PC-3 (cell line): ENCODE measurements at regions of chr6 and their contacts with region 1.

Region 1: GRCh38 chr6:114304304-114304887 is 38.4 kb downstream of the HS3ST5 start:
- DNase-seq: peak; percentile 64
- ATAC-seq: peak; percentile 59
- H3K4me3 ChIP-seq: no peak overlapping the region
- H3K27ac ChIP-seq: no peak overlapping the region
- H3K4me1 ChIP-seq: no peaks in the 10 kb centered on the region; the same call in 1 of the 2 replicates
- H3K27me3 ChIP-seq: no peaks in the 10 kb centered on the region
- CTCF ChIP-seq: peak; percentile 65

Region 2: DNA sequence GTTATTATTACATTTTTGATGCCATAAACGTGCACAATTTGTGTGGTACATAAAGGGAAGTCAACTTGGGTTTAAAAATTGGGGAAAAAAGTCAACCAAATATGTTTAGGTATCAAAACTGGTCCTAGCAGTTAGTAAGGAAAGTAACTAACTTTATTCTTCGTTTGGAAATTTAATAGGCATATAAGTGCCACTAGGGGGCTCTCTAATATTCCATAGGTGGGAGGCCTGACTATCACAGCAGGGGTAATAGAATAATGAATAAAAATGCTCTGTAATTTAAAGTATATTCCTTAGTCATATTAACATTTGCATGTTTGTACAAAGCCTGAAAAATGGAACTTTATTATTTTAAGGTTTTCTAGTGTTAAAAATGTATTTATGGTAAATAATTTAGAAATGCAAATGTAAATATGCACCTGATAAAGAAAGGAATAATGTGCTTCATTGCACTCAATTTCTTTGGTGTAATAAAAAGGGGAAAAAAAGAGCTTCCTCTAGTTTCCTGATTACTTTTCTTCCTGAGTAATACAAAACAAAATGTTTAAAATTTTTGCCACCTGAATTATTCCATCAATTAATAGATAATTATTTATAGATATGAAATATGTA is 207.7 kb before region 1 on chr6:
- CTCF ChIA-PET with region 1: no interaction called
- POLR2A ChIA-PET with region 1: no interaction called
- intact Hi-C with region 1: loop called (anchors 2 kb)
- DNase-seq: peak; percentile 52
- ATAC-seq: no peak
- H3K4me3 ChIP-seq: no peak overlapping the region
- H3K27ac ChIP-seq: no peak overlapping the region
- H3K4me1 ChIP-seq: no peaks in the 10 kb centered on the region; the same call in 1 of the 2 replicates
- H3K27me3 ChIP-seq: no peaks in the 10 kb centered on the region
- CTCF ChIP-seq: peak; percentile 81

Region 3: GRCh38 chr6:114169763-114170162 is 134.6 kb before region 1 on chr6:
- CTCF ChIA-PET with region 1: no interaction called
- POLR2A ChIA-PET with region 1: no interaction called
- intact Hi-C with region 1: loop called (anchors 5 kb)
- DNase-seq: no peak
- ATAC-seq: no peak
- H3K4me3 ChIP-seq: no peak overlapping the region
- H3K27ac ChIP-seq: no peak overlapping the region
- H3K4me1 ChIP-seq: no peaks in the 10 kb centered on the region
- H3K27me3 ChIP-seq: no peaks in the 10 kb centered on the region
- CTCF ChIP-seq: no peak